ENCODE measurements at regions of chr2 and their contacts with region 1.

Region 1: DNA sequence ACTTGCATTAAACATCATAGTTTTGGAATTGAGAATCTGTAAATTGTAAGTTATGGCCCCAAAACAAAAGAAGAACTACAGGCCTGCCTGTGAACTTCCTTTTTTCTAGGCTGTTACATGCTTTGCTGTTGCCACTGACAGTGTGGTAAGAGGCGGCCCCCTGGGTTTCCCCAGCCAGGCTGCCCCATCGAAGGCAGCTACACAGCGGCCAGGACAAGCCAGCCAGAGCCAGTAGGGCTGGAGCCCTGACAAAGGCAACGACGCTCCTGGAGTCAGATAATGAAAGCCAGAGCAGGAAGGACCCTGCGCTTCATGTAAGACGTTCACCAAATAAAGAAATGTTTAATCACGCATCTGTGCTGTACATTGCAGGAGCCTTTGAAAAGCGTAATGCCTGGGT is 55.0 kb downstream of the ANKRD44 start:
- DNase-seq: peak; percentile 35 to 87 (median 72)
- ATAC-seq: peak; percentile 72 to 92 (median 82)
- H3K4me3 ChIP-seq: peak overlapping the region; percentile 24 to 29
- H3K4me3 Mint-ChIP-seq: peak overlapping the region; percentile 77 to 83 (median 77)
- H3K27ac ChIP-seq: peak overlapping the region; percentile 95
- H3K27ac Mint-ChIP-seq: peak overlapping the region; percentile 97 to 98
- H3K4me1 ChIP-seq: peaks cover 50 to 66% of the 10 kb centered on the region in 2 experiments
- H3K4me1 Mint-ChIP-seq: peaks cover 78 to 86% (median 83%) of the 10 kb centered on the region in 3 donors
- H3K27me3 ChIP-seq: no peaks in the 10 kb centered on the region
- H3K27me3 Mint-ChIP-seq: no peaks in the 10 kb centered on the region

Region 2: DNA sequence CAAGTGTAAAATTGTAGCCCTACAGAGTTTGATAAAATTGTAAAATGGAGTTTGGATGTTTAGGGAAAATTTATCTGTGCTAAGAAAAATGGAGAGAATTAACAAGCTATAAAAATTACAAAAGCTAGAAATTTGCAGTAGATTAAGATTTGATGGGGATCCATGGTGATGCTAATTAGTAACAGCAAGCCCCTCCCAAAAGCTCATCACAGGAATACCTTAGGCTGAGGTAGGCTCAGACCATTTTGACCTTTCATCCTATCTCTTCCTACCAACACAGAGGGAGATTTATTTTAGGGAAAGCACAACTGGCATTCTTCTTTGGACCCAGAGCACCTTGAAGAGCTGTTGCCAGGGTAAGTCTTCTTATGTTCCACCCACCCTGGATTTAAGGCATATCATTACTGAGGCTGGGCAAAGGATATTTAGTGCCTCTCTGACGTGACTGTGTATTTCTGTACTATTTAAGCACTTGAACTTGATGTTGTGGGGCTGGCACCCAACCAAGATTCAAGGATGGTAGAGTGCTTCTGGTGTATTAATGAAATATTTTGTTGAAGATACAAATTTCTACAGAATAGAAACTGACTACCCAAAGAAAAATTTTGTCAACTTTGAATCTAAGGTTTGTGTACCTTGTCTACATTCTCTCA is 1669.4 kb before region 1 on chr2:
- CTCF ChIA-PET with region 1: no interaction called
- POLR2A ChIA-PET with region 1: interaction called in 1 of 2 experiments, 11 read pairs
- DNase-seq: no peak
- ATAC-seq: no peak
- H3K4me3 ChIP-seq: no peak overlapping the region
- H3K4me3 Mint-ChIP-seq: no peak overlapping the region
- H3K27ac ChIP-seq: no peak overlapping the region
- H3K27ac Mint-ChIP-seq: peak overlapping the region in 1 of 2 donors; percentile 22
- H3K4me1 ChIP-seq: no peaks in the 10 kb centered on the region
- H3K4me1 Mint-ChIP-seq: peaks cover 9 to 15% (median 12%) of the 10 kb centered on the region in 3 donors
- H3K27me3 ChIP-seq: no peaks in the 10 kb centered on the region
- H3K27me3 Mint-ChIP-seq: no peaks in the 10 kb centered on the region

Region 3: DNA sequence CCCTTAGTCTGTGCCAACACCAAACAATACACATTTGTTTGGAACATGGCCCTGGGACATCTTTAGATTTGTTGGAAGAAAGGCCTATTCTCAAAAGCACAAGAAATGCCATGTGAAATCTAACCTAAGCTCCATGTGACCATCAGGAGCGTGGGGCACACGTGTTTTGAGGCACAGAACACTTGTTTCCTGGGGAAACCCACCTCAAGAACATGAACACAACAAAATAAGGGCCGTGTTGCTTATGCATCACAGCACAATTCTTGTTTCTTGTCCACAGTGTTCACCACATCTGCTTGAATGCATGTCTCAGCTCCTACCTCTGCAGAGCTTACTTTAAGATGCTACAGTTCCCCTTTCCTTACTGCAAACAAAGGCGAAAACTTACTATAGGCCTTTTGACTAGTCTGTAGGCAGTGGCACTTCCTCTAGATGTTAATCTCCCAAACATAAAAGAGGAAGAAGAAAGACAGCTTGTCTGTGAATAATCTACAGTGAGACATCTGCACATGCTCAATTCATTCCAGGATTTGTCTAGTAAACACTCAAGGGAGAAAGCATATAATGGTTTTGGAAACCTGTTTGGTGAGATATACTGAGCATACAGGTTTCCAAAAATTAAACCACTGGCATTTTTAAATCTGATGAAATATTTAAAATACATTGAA is 109.9 kb before region 1 on chr2:
- CTCF ChIA-PET with region 1: interaction called, 3 to 13 read pairs
- POLR2A ChIA-PET with region 1: no interaction called
- DNase-seq: peak in 25 of 35 experiments; percentile 4 to 67 (median 22)
- ATAC-seq: peak; percentile 91 to 94 (median 93)
- H3K4me3 ChIP-seq: no peak overlapping the region
- H3K4me3 Mint-ChIP-seq: peak overlapping the region in 2 of 3 donors; percentile 13 to 44
- H3K27ac ChIP-seq: peak overlapping the region; percentile 66
- H3K27ac Mint-ChIP-seq: peak overlapping the region; percentile 90 to 95
- H3K4me1 ChIP-seq: peaks cover 45 to 61% of the 10 kb centered on the region in 2 experiments
- H3K4me1 Mint-ChIP-seq: peaks cover 82 to 87% (median 84%) of the 10 kb centered on the region in 3 donors
- H3K27me3 ChIP-seq: no peaks in the 10 kb centered on the region
- H3K27me3 Mint-ChIP-seq: no peaks in the 10 kb centered on the region

Region 4: GRCh38 chr2:197161774-197162173 is 93.8 kb before region 1 on chr2:
- CTCF ChIA-PET with region 1: no interaction called
- POLR2A ChIA-PET with region 1: no interaction called
- DNase-seq: no peak
- ATAC-seq: no peak
- H3K4me3 ChIP-seq: no peak overlapping the region
- H3K4me3 Mint-ChIP-seq: peak overlapping the region in 1 of 3 donors; percentile 7
- H3K27ac ChIP-seq: peak overlapping the region; percentile 19
- H3K27ac Mint-ChIP-seq: peak overlapping the region; percentile 83 to 90
- H3K4me1 ChIP-seq: peaks cover 36 to 48% of the 10 kb centered on the region in 2 experiments
- H3K4me1 Mint-ChIP-seq: peaks cover 77 to 88% (median 84%) of the 10 kb centered on the region in 3 donors
- H3K27me3 ChIP-seq: no peaks in the 10 kb centered on the region
- H3K27me3 Mint-ChIP-seq: no peaks in the 10 kb centered on the region

Region 5: GRCh38 chr2:197239434-197239833 is 16.1 kb before region 1 on chr2:
- CTCF ChIA-PET with region 1: interaction called, 3 to 7 read pairs
- POLR2A ChIA-PET with region 1: interaction called, 5 to 19 read pairs
- DNase-seq: peak in 1 of 35 experiments; percentile 53
- ATAC-seq: peak in 3 of 4 experiments; percentile 27 to 33 (median 30)
- H3K4me3 ChIP-seq: peak overlapping the region; percentile 23 to 53
- H3K4me3 Mint-ChIP-seq: peak overlapping the region; percentile 74 to 80 (median 78)
- H3K27ac ChIP-seq: peak overlapping the region; percentile 95
- H3K27ac Mint-ChIP-seq: peak overlapping the region; percentile 93 to 98
- H3K4me1 ChIP-seq: peaks cover 68 to 85% of the 10 kb centered on the region in 2 experiments
- H3K4me1 Mint-ChIP-seq: peaks cover 86 to 90% (median 88%) of the 10 kb centered on the region in 3 donors
- H3K27me3 ChIP-seq: no peaks in the 10 kb centered on the region
- H3K27me3 Mint-ChIP-seq: no peaks in the 10 kb centered on the region

Measured in T-cell (primary cell).